ENCODE measurements at regions of chr10 and their contacts with region 1.

Region 1: GRCh38 chr10:32923849-32924248 is 34.2 kb downstream of the ITGB1 start:
- DNase-seq: no peak
- H3K4me3 ChIP-seq: no peak overlapping the region
- H3K27ac ChIP-seq: no peak overlapping the region
- H3K4me1 ChIP-seq: peaks cover 6% of the 10 kb centered on the region
- H3K27me3 ChIP-seq: no peaks in the 10 kb centered on the region
- CTCF ChIP-seq: no peak

Region 2: GRCh38 chr10:32865170-32865569 is 58.7 kb before region 1 on chr10:
- CTCF ChIA-PET with region 1: no interaction called
- dilution Hi-C with region 1: no loop called
- in situ Hi-C with region 1: no loop called
- intact Hi-C with region 1: loop called (anchors 2 kb)
- DNase-seq: no peak
- H3K4me3 ChIP-seq: no peak overlapping the region
- H3K27ac ChIP-seq: no peak overlapping the region
- H3K4me1 ChIP-seq: no peaks in the 10 kb centered on the region
- H3K27me3 ChIP-seq: no peaks in the 10 kb centered on the region
- CTCF ChIP-seq: no peak